ENCODE measurements at regions of chr3 and their contacts with region 1.

Region 1: GRCh38 chr3:146334151-146334550 is 83.2 kb upstream of the PLSCR4 start:
- DNase-seq: no peak
- H3K4me3 ChIP-seq: no peak overlapping the region
- H3K27ac ChIP-seq: no peak overlapping the region
- H3K4me1 ChIP-seq: no peaks in the 10 kb centered on the region
- H3K27me3 ChIP-seq: no peaks in the 10 kb centered on the region
- CTCF ChIP-seq: peak in 1 of 3 experiments; percentile 15

Region 2: DNA sequence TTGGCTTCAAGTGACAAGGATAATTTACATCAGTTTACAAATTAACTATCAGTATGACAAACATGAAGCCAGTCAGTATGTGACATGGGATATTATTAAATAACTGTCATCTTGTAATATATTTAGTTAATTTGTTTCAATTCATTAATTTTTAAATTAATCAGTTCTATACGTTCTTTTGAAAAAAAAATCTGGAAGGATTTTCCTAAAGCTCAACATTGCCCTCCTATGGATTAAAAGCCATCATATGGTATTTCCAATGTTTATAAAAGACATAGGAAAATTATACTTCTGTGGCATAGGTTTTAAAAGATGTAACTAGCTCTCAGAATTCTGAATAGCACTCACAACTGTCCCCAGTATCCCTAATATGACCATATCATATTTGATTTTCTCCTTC is 307.6 kb before region 1 on chr3:
- intact Hi-C with region 1: no loop called
- DNase-seq: no peak
- H3K4me3 ChIP-seq: no peak overlapping the region
- H3K27ac ChIP-seq: no peak overlapping the region
- H3K4me1 ChIP-seq: no peaks in the 10 kb centered on the region
- H3K27me3 ChIP-seq: no peaks in the 10 kb centered on the region
- CTCF ChIP-seq: no peak

Region 3: DNA sequence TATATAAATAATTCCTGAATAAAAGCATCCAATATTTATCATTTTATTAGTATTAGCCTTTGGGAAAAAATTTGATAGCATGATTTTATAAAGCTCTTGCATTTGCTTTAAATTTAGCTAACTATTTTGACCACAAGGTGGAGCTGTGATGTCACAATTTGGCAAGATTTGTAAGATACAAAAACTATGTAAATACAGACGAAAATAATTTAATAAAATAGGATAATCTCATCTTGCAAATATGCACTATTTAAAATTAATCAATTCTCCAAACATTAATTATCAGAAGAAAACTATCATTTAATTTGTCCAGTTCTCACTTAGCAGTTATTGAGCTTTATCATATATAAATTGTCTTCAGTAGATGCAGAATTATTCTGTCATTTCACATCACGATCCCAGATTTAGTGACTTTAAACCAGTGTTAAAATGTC is 268.6 kb before region 1 on chr3:
- intact Hi-C with region 1: loop called (anchors 2 kb)
- DNase-seq: no peak
- H3K4me3 ChIP-seq: no peak overlapping the region
- H3K27ac ChIP-seq: no peak overlapping the region
- H3K4me1 ChIP-seq: no peaks in the 10 kb centered on the region
- H3K27me3 ChIP-seq: no peaks in the 10 kb centered on the region
- CTCF ChIP-seq: peak; percentile 43 to 73 (median 60)

Measured in ascending aorta (tissue), 2 donors.